Left cardiac atrium (tissue), 4 donors: ENCODE measurements at regions of chr13 and their contacts with region 1.

Region 1: DNA sequence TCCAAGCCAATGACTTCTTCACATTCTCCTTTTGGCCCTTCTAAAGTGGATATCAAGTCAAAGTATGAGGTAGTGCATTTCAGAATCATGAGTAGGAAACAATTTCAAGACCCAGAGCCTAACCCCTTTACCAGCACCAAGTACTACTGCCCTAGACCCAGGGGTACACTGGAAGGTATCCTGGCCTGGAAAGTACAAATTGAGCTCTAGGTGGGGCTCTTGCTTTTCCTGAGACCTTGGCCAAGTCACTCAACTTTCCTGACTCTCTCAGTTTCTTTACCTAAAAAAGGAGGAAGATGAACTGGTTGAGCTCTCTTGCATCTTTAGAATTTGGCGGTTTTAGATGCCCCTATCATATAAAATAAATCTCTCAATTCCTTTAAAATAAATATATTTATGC is 204.7 kb downstream of the FGF14 start:
- DNase-seq: no peak
- ATAC-seq: peak in 1 of 2 donors; percentile 48

Region 2: GRCh38 chr13:101942038-101942437 is 255.2 kb before region 1 on chr13:
- intact Hi-C with region 1: no loop called
- DNase-seq: no peak
- ATAC-seq: peak; percentile 82 to 87

Region 3: DNA sequence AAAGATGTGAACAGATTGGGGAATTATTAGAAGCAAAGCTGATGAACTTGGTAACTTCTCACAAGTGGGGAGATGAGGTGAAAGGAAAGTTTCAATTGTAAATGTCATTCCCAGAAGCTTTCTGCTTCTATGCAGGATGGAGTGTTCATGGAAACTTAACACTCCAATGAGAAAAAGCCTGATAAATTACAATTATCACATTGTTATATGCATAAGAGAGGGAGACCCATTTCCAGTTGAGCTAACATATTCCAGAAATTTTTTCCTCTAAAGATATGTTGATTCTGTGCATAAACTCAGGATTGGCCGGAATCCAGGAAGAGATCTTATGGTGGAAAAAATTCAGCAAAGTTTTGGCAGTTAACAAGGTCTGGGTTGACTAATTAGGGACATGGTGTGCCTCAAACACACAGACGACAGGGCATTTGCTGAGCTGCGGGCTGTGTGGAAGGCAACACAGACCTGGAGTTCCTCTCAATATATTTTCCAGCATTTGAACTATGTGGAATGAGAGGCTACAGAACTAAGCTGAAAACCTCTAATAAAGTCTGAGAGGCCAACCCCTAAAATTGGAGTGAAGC is 269.5 kb after region 1 on chr13:
- intact Hi-C with region 1: loop called in 1 of 2 experiments (anchors 10 kb)
- DNase-seq: no peak
- ATAC-seq: no peak